ENCODE measurements at regions of chr12 and their contacts with region 1.

Region 1: DNA sequence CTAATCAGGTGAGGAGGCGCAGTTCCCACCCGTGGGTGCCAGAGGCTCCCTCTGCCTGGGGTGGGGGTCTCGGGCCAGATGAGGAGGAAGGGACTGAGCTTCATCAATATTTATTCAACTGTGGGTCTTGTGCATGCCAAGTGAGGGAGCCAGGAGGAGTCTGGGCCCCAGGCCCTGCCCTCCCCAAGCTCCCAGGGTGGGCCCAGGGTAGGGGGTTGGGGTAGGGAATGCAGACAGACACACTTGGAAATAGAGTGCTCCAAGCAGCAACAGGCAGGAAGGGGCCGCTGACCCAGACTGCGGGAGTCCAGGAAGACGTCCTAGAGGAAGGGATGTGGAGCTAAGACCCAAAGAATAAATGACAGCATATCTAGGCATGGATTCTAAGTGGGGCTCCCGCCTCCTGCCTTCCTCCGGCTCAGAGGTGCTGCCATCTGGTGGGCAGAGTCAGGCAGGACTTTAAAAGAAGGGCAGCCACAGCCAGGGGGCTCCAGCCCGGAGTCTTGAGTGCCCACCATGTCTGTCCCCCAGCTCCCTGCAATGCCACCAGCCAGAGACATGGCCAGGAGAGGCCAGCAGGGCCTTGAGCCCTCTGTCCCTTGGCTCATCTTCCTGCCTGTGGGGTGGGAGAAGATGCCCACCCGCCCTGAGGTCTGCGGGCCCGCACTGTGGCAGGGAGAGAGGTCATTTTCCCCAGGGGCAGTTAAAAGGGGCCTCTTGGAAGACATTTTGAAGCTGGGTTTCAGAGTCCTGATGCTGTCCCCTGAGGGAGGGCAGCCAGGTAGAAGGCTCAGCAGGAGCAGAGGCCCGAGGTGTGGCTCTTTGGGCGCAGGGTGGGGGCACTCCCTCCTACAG is 70.1 kb downstream of the PHETA1 start:
- DNase-seq: peak; percentile 43
- ATAC-seq: peak; percentile 54
- H3K4me3 Mint-ChIP-seq: no peak overlapping the region
- H3K27ac Mint-ChIP-seq: no peak overlapping the region
- H3K4me1 Mint-ChIP-seq: no peaks in the 10 kb centered on the region
- H3K27me3 Mint-ChIP-seq: peaks cover 2% of the 10 kb centered on the region
- CTCF ChIP-seq: no peak

Region 2: GRCh38 chr12:111024205-111024801 is 274.5 kb before region 1 on chr12:
- CTCF ChIA-PET with region 1: no interaction called
- POLR2A ChIA-PET with region 1: interaction called, 3 read pairs
- intact Hi-C with region 1: loop called (anchors 1 kb)
- DNase-seq: no peak
- ATAC-seq: peak; percentile 54
- H3K4me3 Mint-ChIP-seq: no peak overlapping the region
- H3K27ac Mint-ChIP-seq: no peak overlapping the region
- H3K4me1 Mint-ChIP-seq: no peaks in the 10 kb centered on the region
- H3K27me3 Mint-ChIP-seq: peaks cover 43% of the 10 kb centered on the region
- CTCF ChIP-seq: no peak

Region 3: GRCh38 chr12:111201036-111201435 is 97.8 kb before region 1 on chr12:
- CTCF ChIA-PET with region 1: no interaction called
- POLR2A ChIA-PET with region 1: no interaction called
- intact Hi-C with region 1: no loop called
- DNase-seq: no peak
- ATAC-seq: no peak
- H3K4me3 Mint-ChIP-seq: no peak overlapping the region
- H3K27ac Mint-ChIP-seq: no peak overlapping the region
- H3K4me1 Mint-ChIP-seq: no peaks in the 10 kb centered on the region
- H3K27me3 Mint-ChIP-seq: peaks cover 24% of the 10 kb centered on the region
- CTCF ChIP-seq: no peak

Measured in activated B cell treated with CpG ODN at 0.5 μM for 24 hours (primary cell).